Caco-2 (cell line): ENCODE measurements at regions of chr11 and their contacts with region 1.

Region 1: GRCh38 chr11:134578807-134579723 is 167.0 kb upstream of the B3GAT1 start:
- DNase-seq: peak; percentile 69 to 70
- H3K4me3 ChIP-seq: no peak overlapping the region
- H3K4me3 Mint-ChIP-seq: no peak overlapping the region
- H3K27ac Mint-ChIP-seq: no peak overlapping the region
- H3K4me1 ChIP-seq: peaks cover 5% of the 10 kb centered on the region; the same call in 1 of the 2 replicates
- H3K4me1 Mint-ChIP-seq: peaks cover 12% of the 10 kb centered on the region
- H3K27me3 ChIP-seq: no peaks in the 10 kb centered on the region
- H3K27me3 Mint-ChIP-seq: no peaks in the 10 kb centered on the region
- CTCF ChIP-seq: peak; percentile 53 to 76

Region 2: GRCh38 chr11:134275534-134276395 is 303.3 kb before region 1 on chr11 and contains the start of gene GLB1L3:
- CTCF ChIA-PET with region 1: no interaction called
- POLR2A ChIA-PET with region 1: no interaction called
- intact Hi-C with region 1: loop called (anchors 10 kb)
- DNase-seq: peak; percentile 41 to 60
- H3K4me3 ChIP-seq: peak within 1 kb of the TSS; percentile 24
- H3K4me3 Mint-ChIP-seq: peak within 1 kb of the TSS; percentile 57
- H3K27ac Mint-ChIP-seq: no peak within 1 kb of the TSS
- H3K4me1 ChIP-seq: peaks cover 10% of the 10 kb centered on the region
- H3K4me1 Mint-ChIP-seq: peaks cover 10% of the 10 kb centered on the region
- H3K27me3 ChIP-seq: peaks cover 5% of the 10 kb centered on the region
- H3K27me3 Mint-ChIP-seq: peaks cover 30% of the 10 kb centered on the region
- CTCF ChIP-seq: peak; percentile 40 to 47
- total RNA-seq, gene GLB1L3: not detected in 2 replicates

Region 3: GRCh38 chr11:134393638-134394037 is 185.4 kb before region 1 on chr11:
- CTCF ChIA-PET with region 1: interaction called, 5 read pairs
- POLR2A ChIA-PET with region 1: no interaction called
- intact Hi-C with region 1: loop called (anchors 1 kb)
- DNase-seq: peak; percentile 61 to 67
- H3K4me3 ChIP-seq: no peak overlapping the region
- H3K4me3 Mint-ChIP-seq: no peak overlapping the region
- H3K27ac Mint-ChIP-seq: no peak overlapping the region
- H3K4me1 ChIP-seq: no peaks in the 10 kb centered on the region
- H3K4me1 Mint-ChIP-seq: no peaks in the 10 kb centered on the region
- H3K27me3 ChIP-seq: peaks cover 1% of the 10 kb centered on the region; the same call in 1 of the 2 replicates
- H3K27me3 Mint-ChIP-seq: peaks cover 3% of the 10 kb centered on the region
- CTCF ChIP-seq: peak; percentile 61 to 88

Region 4: DNA sequence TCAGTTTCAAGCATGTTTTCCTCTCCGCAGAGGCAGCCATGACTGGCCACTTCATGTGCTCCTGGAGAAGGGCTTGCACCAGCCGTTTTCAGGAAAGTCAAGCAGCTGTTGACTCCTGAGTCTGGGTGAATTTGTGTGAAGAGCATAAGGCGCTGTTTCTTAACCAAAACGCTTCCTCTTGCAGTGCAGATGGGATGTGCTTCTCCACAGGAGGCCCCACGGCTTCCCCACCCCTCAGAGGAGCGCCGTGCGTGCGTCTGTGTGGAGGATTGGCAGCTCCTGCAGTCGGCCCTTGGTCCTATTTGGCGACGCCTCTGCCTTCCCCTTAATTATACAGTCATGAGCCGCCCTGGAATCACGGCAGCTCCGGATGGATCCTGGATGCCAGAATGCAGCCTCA is 112.9 kb before region 1 on chr11:
- CTCF ChIA-PET with region 1: no interaction called
- POLR2A ChIA-PET with region 1: no interaction called
- intact Hi-C with region 1: loop called (anchors 2 kb)
- DNase-seq: no peak
- H3K4me3 ChIP-seq: no peak overlapping the region
- H3K4me3 Mint-ChIP-seq: no peak overlapping the region
- H3K27ac Mint-ChIP-seq: no peak overlapping the region
- H3K4me1 ChIP-seq: peaks cover 18% of the 10 kb centered on the region
- H3K4me1 Mint-ChIP-seq: peaks cover 6% of the 10 kb centered on the region
- H3K27me3 ChIP-seq: no peaks in the 10 kb centered on the region
- H3K27me3 Mint-ChIP-seq: peaks cover 4% of the 10 kb centered on the region
- CTCF ChIP-seq: no peak

Region 5: DNA sequence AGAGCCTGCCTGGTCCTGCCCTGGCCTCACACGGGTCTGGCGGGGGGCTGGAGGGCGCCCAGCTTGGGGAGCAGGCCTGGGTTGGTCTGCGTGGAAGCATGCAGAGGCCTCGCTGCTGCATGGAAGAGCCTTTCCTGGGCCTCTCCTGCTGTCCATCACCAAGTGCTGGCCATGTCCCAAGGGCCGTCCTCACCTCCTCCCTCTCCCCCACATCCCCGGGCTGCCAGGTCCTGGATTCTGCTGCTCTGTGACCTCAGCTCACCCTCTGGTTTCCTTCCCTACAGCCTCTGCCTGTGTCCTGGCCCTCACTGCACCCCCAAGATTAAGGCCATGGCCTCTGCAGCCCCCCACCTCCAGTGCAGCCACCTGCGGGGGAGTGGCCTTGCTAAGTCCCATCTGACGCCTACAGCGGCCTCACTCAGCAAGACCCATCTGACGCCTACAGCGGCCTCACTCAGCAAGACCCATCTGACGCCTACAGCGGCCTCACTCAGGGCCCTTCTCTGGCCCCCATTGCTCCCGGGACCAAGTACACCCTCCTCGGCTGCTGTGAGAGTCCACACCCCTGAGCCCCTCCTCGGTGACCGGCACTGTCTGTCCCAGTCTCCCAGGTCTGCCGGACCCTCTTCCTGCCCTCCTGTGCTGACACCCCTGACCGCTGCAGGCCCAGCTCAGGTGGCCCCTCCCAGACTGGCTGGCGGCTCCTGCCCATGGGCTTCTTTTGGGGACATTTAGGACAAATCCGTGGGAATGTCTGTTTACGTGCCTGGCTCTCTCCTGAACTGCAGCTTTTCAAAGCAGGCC is 47.5 kb before region 1 on chr11:
- CTCF ChIA-PET with region 1: interaction called, 6 read pairs
- POLR2A ChIA-PET with region 1: no interaction called
- intact Hi-C with region 1: loop called (anchors 2 kb)
- DNase-seq: peak in 1 of 2 experiments; percentile 30
- H3K4me3 ChIP-seq: no peak overlapping the region
- H3K4me3 Mint-ChIP-seq: no peak overlapping the region
- H3K27ac Mint-ChIP-seq: no peak overlapping the region
- H3K4me1 ChIP-seq: no peaks in the 10 kb centered on the region
- H3K4me1 Mint-ChIP-seq: no peaks in the 10 kb centered on the region
- H3K27me3 ChIP-seq: no peaks in the 10 kb centered on the region
- H3K27me3 Mint-ChIP-seq: peaks cover 9% of the 10 kb centered on the region
- CTCF ChIP-seq: no peak

Region 6: DNA sequence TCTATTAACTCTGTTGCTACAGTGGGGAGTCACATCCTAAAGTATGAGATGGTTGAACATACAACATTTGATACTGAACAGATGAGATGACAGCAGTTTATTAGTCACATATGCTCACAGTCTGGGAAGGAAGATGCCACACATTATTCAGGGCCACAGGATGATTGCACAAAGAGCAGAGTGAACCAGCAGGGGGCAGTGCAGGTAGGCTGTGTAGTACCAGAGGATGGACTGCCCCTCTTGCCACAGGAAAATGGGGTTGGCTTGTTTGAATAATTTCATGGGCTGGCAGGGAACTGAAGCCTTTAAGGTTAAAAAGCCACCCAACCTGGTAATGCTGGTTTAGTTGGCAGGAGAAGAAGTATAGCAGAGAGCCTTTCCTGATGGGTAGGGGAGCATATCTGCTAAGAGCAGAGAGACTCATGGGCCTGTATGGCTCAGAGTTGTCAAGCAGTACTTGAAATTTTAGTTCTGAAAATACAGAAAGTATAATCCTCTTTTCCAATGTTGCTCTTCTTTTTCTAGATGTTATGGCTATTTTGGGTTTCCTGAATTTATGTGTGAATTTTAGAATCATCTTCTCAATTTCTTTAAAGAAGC is 13.4 kb after region 1 on chr11:
- CTCF ChIA-PET with region 1: no interaction called
- POLR2A ChIA-PET with region 1: no interaction called
- intact Hi-C with region 1: no loop called
- DNase-seq: peak; percentile 53 to 70
- H3K4me3 ChIP-seq: no peak overlapping the region
- H3K4me3 Mint-ChIP-seq: no peak overlapping the region
- H3K27ac Mint-ChIP-seq: no peak overlapping the region
- H3K4me1 ChIP-seq: no peaks in the 10 kb centered on the region
- H3K4me1 Mint-ChIP-seq: no peaks in the 10 kb centered on the region
- H3K27me3 ChIP-seq: no peaks in the 10 kb centered on the region
- H3K27me3 Mint-ChIP-seq: peaks cover 9% of the 10 kb centered on the region
- CTCF ChIP-seq: peak; percentile 50 to 80

Region 7: DNA sequence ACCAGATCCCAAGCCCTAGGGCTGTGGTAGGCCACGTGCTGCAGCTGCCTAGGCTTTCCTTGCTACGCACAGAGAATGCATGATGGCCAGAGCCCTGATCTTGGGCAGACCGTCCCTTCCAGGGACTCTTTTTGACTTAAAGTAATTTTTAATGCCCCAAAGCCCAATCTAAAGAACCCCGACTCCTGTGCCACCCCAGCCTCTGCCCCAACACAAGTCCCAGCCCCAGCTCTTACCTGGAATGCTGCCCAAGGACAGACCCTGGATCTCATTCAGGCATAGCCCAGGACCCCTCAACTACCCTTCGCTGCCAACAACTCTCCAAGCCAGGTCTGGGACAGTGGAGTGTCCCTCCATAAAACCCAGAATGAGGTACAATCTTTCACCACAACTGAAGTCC is 44.6 kb after region 1 on chr11:
- CTCF ChIA-PET with region 1: no interaction called
- POLR2A ChIA-PET with region 1: no interaction called
- intact Hi-C with region 1: loop called (anchors 1 kb)
- DNase-seq: no peak
- H3K4me3 ChIP-seq: no peak overlapping the region
- H3K4me3 Mint-ChIP-seq: no peak overlapping the region
- H3K27ac Mint-ChIP-seq: no peak overlapping the region
- H3K4me1 ChIP-seq: no peaks in the 10 kb centered on the region
- H3K4me1 Mint-ChIP-seq: no peaks in the 10 kb centered on the region
- H3K27me3 ChIP-seq: no peaks in the 10 kb centered on the region; the same call in 1 of the 2 replicates
- H3K27me3 Mint-ChIP-seq: peaks cover 23% of the 10 kb centered on the region
- CTCF ChIP-seq: no peak